Activated CD8-positive, alpha-beta T cell treated with anti-CD3 and anti-CD28 coated beads for 36 hours (primary cell): ENCODE measurements at regions of chr3 and their contacts with region 1.

Region 1: DNA sequence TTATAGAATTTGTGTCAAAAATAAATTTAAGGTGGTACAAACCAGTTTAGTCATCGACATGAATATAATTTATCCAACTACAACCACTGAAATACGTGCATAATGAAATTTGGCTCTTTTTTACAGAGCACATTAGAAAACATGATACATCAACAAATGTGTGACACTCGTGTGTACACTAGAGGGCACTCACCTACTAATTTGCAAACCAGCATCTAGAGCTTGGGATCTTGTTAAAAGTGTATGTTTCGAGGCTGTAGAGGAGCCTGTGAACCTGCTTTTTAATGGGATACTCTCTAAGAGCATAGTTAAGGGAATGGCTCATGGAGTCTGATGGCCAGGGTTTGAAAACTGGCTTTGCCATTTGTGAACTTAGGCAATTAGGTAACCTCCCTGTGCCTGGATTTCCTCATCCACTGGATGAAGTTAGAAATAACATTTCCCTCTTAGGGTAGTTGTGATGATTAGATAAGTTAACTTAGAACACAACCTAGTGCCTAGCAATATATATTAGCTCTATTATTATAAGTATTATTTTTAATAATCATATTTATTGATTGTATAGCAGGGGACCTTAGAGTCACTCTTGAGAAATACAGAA is 8.8 kb upstream of the CPOX start:
- DNase-seq: peak; percentile 41
- ATAC-seq: peak; percentile 60
- H3K4me3 Mint-ChIP-seq: no peak overlapping the region
- H3K27ac Mint-ChIP-seq: no peak overlapping the region
- H3K4me1 Mint-ChIP-seq: peaks cover 3% of the 10 kb centered on the region
- H3K27me3 Mint-ChIP-seq: peaks cover 3% of the 10 kb centered on the region
- CTCF ChIP-seq: peak; percentile 76

Region 2: GRCh38 chr3:98612587-98612986 is 10.4 kb after region 1 on chr3:
- CTCF ChIA-PET with region 1: interaction called, 19 read pairs
- POLR2A ChIA-PET with region 1: no interaction called
- intact Hi-C with region 1: no loop called
- DNase-seq: peak; percentile 22
- ATAC-seq: no peak
- H3K4me3 Mint-ChIP-seq: no peak overlapping the region
- H3K27ac Mint-ChIP-seq: no peak overlapping the region
- H3K4me1 Mint-ChIP-seq: no peaks in the 10 kb centered on the region
- H3K27me3 Mint-ChIP-seq: no peaks in the 10 kb centered on the region
- CTCF ChIP-seq: no peak

Region 3: DNA sequence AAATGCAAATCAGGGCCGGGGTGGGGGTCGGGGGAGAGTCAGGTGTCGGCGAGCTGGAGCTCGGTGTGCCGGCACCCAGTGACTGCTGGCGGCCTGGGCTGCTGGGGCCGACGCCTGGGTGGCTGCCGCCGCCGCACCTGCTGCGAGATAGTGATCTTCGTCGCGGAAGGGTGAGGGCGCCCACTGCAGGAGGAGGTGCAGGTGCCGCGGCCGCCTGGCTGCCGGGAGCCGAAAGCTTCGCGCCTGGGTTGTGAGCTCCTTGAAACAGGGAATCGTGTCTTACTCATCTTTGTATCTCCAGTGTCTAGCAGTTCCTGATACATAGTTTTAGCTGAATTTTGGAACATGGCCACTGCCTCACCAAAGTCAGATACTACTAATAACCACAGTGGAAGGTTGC is 55.3 kb after region 1 on chr3:
- CTCF ChIA-PET with region 1: interaction called, 23 read pairs
- POLR2A ChIA-PET with region 1: no interaction called
- intact Hi-C with region 1: no loop called
- DNase-seq: peak; percentile 65
- ATAC-seq: peak; percentile 74
- H3K4me3 Mint-ChIP-seq: no peak overlapping the region
- H3K27ac Mint-ChIP-seq: no peak overlapping the region
- H3K4me1 Mint-ChIP-seq: no peaks in the 10 kb centered on the region
- H3K27me3 Mint-ChIP-seq: peaks cover 15% of the 10 kb centered on the region
- CTCF ChIP-seq: no peak